Naive thymus-derived CD4-positive, alpha-beta T cell (primary cell): ENCODE measurements at regions of chr17 and their contacts with region 1.

Region 1: DNA sequence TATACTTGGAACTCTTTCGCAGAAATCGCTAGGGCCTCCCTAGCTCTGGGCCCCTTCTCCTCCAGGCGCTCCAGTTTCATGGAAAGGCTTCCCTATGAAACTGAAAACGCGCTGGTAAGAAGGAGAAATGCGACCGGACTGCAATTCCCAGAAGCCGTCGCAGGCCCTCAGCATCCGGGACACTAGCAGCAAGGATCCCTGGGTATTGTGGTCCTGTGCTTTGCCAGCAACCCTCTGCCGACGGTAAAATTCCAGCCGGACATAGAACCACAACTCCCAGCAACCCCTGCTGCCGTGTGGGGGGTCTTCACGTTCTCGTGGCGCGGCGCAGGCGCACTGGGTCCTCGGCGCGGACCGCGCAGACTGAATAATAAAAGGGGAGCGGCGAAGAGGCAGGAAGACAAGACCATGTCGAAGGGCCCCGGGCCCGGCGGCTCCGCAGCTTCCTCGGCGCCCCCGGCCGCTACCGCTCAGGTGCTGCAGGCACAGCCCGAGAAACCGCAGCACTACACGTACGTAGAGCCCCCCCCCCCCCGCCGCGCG is at the start of gene UNK:
- DNase-seq: peak; percentile 86 to 98 (median 96)
- ATAC-seq: peak; percentile 80
- H3K4me3 ChIP-seq: peak within 1 kb of the TSS; percentile 94
- H3K4me3 Mint-ChIP-seq: peak within 1 kb of the TSS; percentile 84 to 98 (median 92)
- H3K27ac ChIP-seq: peak within 1 kb of the TSS; percentile 99
- H3K27ac Mint-ChIP-seq: peak within 1 kb of the TSS; percentile 99 to 100 (median 100)
- H3K4me1 ChIP-seq: peaks cover 31 to 33% of the 10 kb centered on the region in 2 donors
- H3K4me1 Mint-ChIP-seq: peaks cover 23 to 60% (median 51%) of the 10 kb centered on the region in 7 donors
- H3K27me3 ChIP-seq: no peaks in the 10 kb centered on the region
- H3K27me3 Mint-ChIP-seq: peaks cover 0 to 2% (median 0%) of the 10 kb centered on the region in 5 donors
- total RNA-seq, gene UNK: 32.0 to 49.8 (median 41.0) TPM

Region 2: GRCh38 chr17:75261336-75262111 is 523.0 kb before region 1 on chr17 and contains the starts of genes GGA3 and MRPS7:
- CTCF ChIA-PET with region 1: no interaction called
- POLR2A ChIA-PET with region 1: interaction called, 3 read pairs
- intact Hi-C with region 1: loop called (anchors 1 to 5 kb)
- DNase-seq: peak; percentile 94 to 98 (median 96)
- ATAC-seq: peak; percentile 97
- H3K4me3 ChIP-seq: peak within 1 kb of the TSS; percentile 98
- H3K4me3 Mint-ChIP-seq: peak within 1 kb of the TSS; percentile 94 to 100 (median 97)
- H3K27ac ChIP-seq: peak within 1 kb of the TSS; percentile 99
- H3K27ac Mint-ChIP-seq: peak within 1 kb of the TSS; percentile 100
- H3K4me1 ChIP-seq: peaks cover 23% of the 10 kb centered on the region in 2 donors
- H3K4me1 Mint-ChIP-seq: peaks cover 40 to 65% (median 62%) of the 10 kb centered on the region in 7 donors
- H3K27me3 ChIP-seq: no peaks in the 10 kb centered on the region
- H3K27me3 Mint-ChIP-seq: no peaks in the 10 kb centered on the region
- total RNA-seq, gene GGA3: 79.6 to 128 (median 87.4) TPM
- total RNA-seq, gene MRPS7: 29.2 to 70.1 (median 34.4) TPM

Region 3: DNA sequence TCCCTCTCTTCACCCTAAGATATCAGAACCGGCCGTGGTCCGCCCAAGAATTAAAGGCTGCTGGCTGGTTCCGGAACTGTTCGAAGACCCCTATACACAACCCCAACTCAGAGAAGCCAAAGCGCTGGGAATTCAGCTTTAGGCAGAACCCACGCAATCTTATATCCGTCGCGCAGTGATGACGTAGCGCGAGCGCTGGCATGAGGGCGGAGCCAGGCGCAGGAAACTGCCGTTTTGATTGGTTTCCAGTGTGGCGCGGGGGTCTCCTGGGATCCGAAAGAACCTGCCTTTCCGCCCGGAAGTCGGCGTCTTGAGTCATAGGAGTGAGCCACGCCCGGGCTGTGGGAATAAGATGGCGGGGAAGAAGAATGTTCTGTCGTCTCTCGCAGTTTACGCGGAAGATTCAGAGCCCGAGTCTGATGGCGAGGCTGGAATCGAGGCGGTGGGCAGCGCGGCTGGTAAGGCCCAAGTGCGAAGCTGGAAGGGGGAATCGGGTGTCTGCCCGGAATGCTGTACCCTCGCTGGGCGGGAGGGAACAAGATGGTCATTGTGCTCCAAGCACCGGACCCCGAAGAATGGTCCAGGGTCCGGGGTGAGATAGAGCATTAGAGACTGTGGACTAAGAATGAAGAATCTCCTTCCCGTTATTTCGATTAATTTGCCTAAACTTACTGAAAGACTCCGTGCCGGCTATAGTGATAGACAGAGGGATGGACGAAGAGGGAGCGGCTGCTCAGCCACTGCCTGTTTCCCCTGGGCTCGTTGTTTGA is 117.3 kb before region 1 on chr17 and contains the starts of genes RECQL5 and SAP30BP:
- CTCF ChIA-PET with region 1: no interaction called
- POLR2A ChIA-PET with region 1: interaction called, 5 read pairs
- intact Hi-C with region 1: loop called in 1 of 2 experiments (anchors 1 kb)
- DNase-seq: peak; percentile 94 to 98 (median 96)
- ATAC-seq: peak; percentile 100
- H3K4me3 ChIP-seq: peak within 1 kb of the TSS; percentile 99
- H3K4me3 Mint-ChIP-seq: peak within 1 kb of the TSS in 6 of 10 donors; percentile 59 to 74 (median 64)
- H3K27ac ChIP-seq: peak within 1 kb of the TSS; percentile 96
- H3K27ac Mint-ChIP-seq: peak within 1 kb of the TSS in 5 of 9 donors; percentile 6 to 83 (median 60)
- H3K4me1 ChIP-seq: peaks cover 21 to 26% of the 10 kb centered on the region in 2 donors
- H3K4me1 Mint-ChIP-seq: peaks cover 11 to 34% (median 21%) of the 10 kb centered on the region in 7 donors
- H3K27me3 ChIP-seq: no peaks in the 10 kb centered on the region
- H3K27me3 Mint-ChIP-seq: no peaks in the 10 kb centered on the region
- total RNA-seq, gene RECQL5: 38.7 to 76.5 (median 49.2) TPM
- total RNA-seq, gene SAP30BP: 97.6 to 198 (median 116) TPM

Region 4: GRCh38 chr17:75822119-75822799 is 37.7 kb after region 1 on chr17:
- CTCF ChIA-PET with region 1: interaction called, 30 read pairs
- POLR2A ChIA-PET with region 1: interaction called, 77 read pairs
- intact Hi-C with region 1: loop called (anchors 2 to 5 kb)
- DNase-seq: peak in 7 of 9 donors; percentile 26 to 49 (median 46)
- ATAC-seq: peak; percentile 69
- H3K4me3 ChIP-seq: no peak overlapping the region
- H3K4me3 Mint-ChIP-seq: peak overlapping the region in 8 of 10 donors; percentile 12 to 62 (median 50)
- H3K27ac ChIP-seq: peak overlapping the region; percentile 67
- H3K27ac Mint-ChIP-seq: peak overlapping the region; percentile 69 to 93 (median 89)
- H3K4me1 ChIP-seq: peaks cover 10 to 15% of the 10 kb centered on the region in 2 donors
- H3K4me1 Mint-ChIP-seq: peaks cover 17 to 25% (median 18%) of the 10 kb centered on the region in 7 donors
- H3K27me3 ChIP-seq: no peaks in the 10 kb centered on the region
- H3K27me3 Mint-ChIP-seq: no peaks in the 10 kb centered on the region

Region 5: GRCh38 chr17:75855310-75856081 is 71.0 kb after region 1 on chr17 and contains the start of gene WBP2:
- CTCF ChIA-PET with region 1: interaction called, 6 read pairs
- POLR2A ChIA-PET with region 1: interaction called, 238 read pairs
- intact Hi-C with region 1: loop called (anchors 1 to 5 kb)
- DNase-seq: peak; percentile 82 to 100 (median 98)
- ATAC-seq: peak; percentile 94
- H3K4me3 ChIP-seq: peak within 1 kb of the TSS; percentile 93
- H3K4me3 Mint-ChIP-seq: peak within 1 kb of the TSS in 2 of 10 donors; percentile 89 to 92
- H3K27ac ChIP-seq: peak within 1 kb of the TSS; percentile 88
- H3K27ac Mint-ChIP-seq: peak within 1 kb of the TSS in 6 of 9 donors; percentile 84 to 95 (median 90)
- H3K4me1 ChIP-seq: peaks cover 19 to 25% of the 10 kb centered on the region in 2 donors
- H3K4me1 Mint-ChIP-seq: peaks cover 19 to 47% (median 39%) of the 10 kb centered on the region in 7 donors
- H3K27me3 ChIP-seq: no peaks in the 10 kb centered on the region
- H3K27me3 Mint-ChIP-seq: no peaks in the 10 kb centered on the region
- total RNA-seq, gene WBP2: 87.7 to 159 (median 112) TPM

Region 6: DNA sequence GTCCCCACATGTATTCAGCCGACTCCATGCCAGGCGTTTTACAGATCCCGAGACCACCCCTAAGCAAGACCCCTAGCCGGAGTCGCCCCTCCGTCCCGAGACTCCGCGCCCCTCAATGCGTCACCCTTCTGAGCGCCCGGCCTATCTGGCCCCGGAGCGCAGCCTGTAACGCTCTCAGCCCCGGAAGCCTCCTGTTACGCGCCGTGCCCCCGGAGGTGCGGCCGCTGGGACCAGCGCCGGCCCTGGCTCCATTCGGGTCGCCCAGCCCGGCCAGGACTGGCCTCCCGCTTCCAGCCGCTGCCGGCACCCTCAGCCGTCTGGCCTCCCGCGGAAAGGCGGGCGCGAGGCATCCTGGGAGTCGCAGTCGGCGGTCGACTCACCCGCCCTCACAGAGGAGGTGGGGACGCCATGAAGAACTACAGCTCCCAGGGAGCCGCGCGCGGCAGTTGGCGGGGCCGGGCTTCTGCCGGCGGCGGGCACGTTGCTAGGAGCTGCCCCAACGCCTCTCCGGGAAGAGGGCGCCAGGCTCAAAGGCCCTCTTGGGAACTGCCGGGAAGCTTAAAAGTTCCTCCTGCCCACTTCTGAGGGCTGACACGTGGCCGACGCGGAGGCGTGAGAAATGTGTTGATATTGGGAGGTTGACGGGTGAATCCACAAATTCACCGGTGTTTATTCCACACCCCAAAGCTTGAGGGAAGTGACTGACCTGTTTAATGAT is 156.3 kb after region 1 on chr17 and contains the start of gene FBF1:
- CTCF ChIA-PET with region 1: no interaction called
- POLR2A ChIA-PET with region 1: interaction called, 3 read pairs
- intact Hi-C with region 1: loop called in 1 of 2 experiments (anchors 1 kb)
- DNase-seq: peak; percentile 74 to 92 (median 82)
- ATAC-seq: peak; percentile 100
- H3K4me3 ChIP-seq: peak within 1 kb of the TSS; percentile 89
- H3K4me3 Mint-ChIP-seq: peak within 1 kb of the TSS; percentile 77 to 93 (median 90)
- H3K27ac ChIP-seq: peak within 1 kb of the TSS; percentile 86
- H3K27ac Mint-ChIP-seq: peak within 1 kb of the TSS; percentile 74 to 94 (median 89)
- H3K4me1 ChIP-seq: peaks cover 5 to 11% of the 10 kb centered on the region in 2 donors
- H3K4me1 Mint-ChIP-seq: peaks cover 9 to 19% (median 11%) of the 10 kb centered on the region in 7 donors
- H3K27me3 ChIP-seq: no peaks in the 10 kb centered on the region
- H3K27me3 Mint-ChIP-seq: no peaks in the 10 kb centered on the region
- total RNA-seq, gene FBF1: 19.9 to 48.1 (median 29.0) TPM

Region 7: DNA sequence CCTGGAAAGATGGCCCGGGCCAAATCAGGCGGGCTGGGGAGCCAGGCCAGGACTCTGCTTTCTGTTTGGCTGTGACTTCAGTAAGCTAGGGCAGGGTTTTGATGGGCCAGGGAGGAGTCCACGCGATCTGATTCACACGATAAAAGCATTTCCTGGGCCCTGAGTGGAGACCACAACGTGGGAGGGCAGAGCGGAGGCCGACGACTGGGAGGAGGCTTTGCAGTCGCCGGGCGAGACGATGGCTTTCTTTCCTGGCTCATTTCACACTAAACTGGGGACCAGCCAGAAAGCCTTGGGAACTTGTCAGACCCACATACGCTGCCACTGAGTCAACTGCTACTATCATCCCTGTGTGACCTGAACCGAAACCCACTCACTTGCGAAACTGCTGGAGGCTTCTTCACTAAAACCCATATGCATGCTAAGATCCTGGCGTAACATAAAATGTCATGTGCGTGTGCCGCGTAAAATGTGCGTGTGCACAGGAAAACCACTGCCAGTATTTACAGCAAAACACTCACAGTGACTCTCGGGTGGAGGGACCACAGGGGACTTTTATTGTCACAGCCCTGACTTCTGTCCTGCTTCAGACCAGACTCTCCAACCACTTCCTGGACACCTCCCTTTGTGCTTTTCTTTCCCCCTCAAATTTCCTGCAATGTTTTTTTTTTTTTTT is 730.9 kb after region 1 on chr17:
- CTCF ChIA-PET with region 1: no interaction called
- POLR2A ChIA-PET with region 1: no interaction called
- intact Hi-C with region 1: loop called in 1 of 2 experiments (anchors 1 kb)
- DNase-seq: peak; percentile 62 to 94 (median 90)
- ATAC-seq: peak; percentile 90
- H3K4me3 ChIP-seq: peak overlapping the region; percentile 12
- H3K4me3 Mint-ChIP-seq: peak overlapping the region; percentile 75 to 89 (median 82)
- H3K27ac ChIP-seq: peak overlapping the region; percentile 96
- H3K27ac Mint-ChIP-seq: peak overlapping the region; percentile 95 to 100 (median 99)
- H3K4me1 ChIP-seq: peaks cover 36 to 58% of the 10 kb centered on the region in 2 donors
- H3K4me1 Mint-ChIP-seq: peaks cover 25 to 67% (median 37%) of the 10 kb centered on the region in 7 donors
- H3K27me3 ChIP-seq: no peaks in the 10 kb centered on the region
- H3K27me3 Mint-ChIP-seq: peaks cover 0 to 5% (median 0%) of the 10 kb centered on the region in 5 donors